Left cardiac atrium (tissue), 4 donors: ENCODE measurements at regions of chrX and their contacts with region 1.

Region 1: GRCh38 chrX:155108427-155108826 is 37.1 kb downstream of the BRCC3 start:
- DNase-seq: no peak
- ATAC-seq: no peak

Region 2: DNA sequence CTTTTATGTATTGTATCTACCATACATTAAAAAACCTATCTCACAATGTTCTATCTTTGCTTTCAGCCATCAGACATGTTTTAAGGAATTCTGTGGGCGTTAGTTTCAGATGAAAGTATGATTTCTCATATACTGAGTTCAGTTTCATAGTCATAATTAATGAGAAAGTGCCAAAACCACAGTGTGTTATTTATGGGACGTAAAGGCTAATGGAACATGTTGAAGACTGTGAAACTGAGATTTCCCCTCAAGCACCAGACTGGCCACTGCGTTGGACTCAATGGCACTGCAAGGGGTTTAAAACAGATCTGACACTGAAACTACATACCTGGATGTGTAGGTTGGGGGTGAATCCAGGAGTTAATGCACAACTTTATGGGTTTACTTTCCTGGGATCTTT is 117.9 kb before region 1 on chrX:
- intact Hi-C with region 1: no loop called
- DNase-seq: no peak
- ATAC-seq: no peak

Region 3: DNA sequence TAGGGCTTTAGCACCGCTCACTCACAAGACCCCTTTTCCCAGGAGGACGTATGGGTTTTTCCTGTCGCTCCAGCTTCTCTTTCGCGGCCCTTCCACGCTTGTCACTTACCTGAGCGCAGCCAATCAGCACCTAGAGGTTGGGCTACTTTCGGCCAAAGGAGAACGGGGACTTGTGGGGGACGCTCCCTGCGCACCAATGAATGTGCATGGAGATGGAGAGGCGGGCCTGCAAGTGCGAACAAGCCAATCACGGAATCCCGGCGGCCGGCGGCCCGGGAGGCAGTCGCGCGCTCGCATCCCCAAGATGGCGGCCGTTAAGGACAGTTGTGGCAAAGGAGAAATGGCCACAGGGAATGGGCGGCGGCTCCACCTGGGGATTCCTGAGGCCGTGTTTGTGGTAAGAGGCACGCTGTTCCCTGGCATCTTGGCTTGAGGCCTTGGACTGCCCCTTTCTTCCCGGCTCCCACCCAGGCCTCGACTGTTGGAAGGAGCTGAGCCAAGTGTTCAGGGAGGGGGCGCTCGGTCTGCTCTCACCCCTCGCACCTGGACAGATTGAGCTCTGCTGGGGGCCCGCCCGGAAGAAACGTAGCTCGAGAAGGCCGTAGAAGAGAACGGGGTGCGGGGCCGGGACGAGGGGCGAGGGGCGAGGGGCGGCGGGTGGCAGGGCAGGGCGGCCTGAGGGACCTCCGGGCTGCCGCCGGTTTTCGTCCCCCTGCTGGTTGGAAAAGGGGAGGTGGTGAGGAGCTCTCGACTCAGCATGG is 107.9 kb after region 1 on chrX and contains the start of gene VBP1:
- intact Hi-C with region 1: loop called in 1 of 2 experiments (anchors 10 kb)
- DNase-seq: peak; percentile 93
- ATAC-seq: peak; percentile 99 to 100
- total RNA-seq, gene VBP1: 59.2 to 60.2 TPM